ENCODE measurements at regions of chr12 and their contacts with region 1.

Region 1: GRCh38 chr12:122980183-122981046 is at the start of gene ARL6IP4:
- DNase-seq: peak in 5 of 10 donors; percentile 36 to 81 (median 64)
- H3K4me3 ChIP-seq: peak within 1 kb of the TSS; percentile 60 to 99 (median 94)
- H3K27ac ChIP-seq: peak within 1 kb of the TSS; percentile 12 to 96 (median 86)
- H3K27me3 ChIP-seq: no peaks in the 10 kb centered on the region
- CTCF ChIP-seq: peak in 19 of 56 donors; percentile 1 to 52 (median 16)
- total RNA-seq, gene ARL6IP4: 127 to 221 (median 162) TPM

Region 2: GRCh38 chr12:123150744-123151456 is 170.5 kb after region 1 on chr12 and contains the start of gene PITPNM2:
- intact Hi-C with region 1: loop called (anchors 5 to 10 kb)
- DNase-seq: peak in 6 of 10 donors; percentile 28 to 72 (median 49)
- H3K4me3 ChIP-seq: peak within 1 kb of the TSS; percentile 48 to 84 (median 75)
- H3K27ac ChIP-seq: peak within 1 kb of the TSS in 58 of 59 donors; percentile 51 to 95 (median 88)
- H3K27me3 ChIP-seq: no peaks in the 10 kb centered on the region
- CTCF ChIP-seq: peak in 5 of 56 donors; percentile 9 to 24 (median 11)
- total RNA-seq, gene PITPNM2: 20.9 to 89.8 (median 62.6) TPM